AG04449 (cell line): ENCODE measurements at regions of chr6 and their contacts with region 1.

Region 1: DNA sequence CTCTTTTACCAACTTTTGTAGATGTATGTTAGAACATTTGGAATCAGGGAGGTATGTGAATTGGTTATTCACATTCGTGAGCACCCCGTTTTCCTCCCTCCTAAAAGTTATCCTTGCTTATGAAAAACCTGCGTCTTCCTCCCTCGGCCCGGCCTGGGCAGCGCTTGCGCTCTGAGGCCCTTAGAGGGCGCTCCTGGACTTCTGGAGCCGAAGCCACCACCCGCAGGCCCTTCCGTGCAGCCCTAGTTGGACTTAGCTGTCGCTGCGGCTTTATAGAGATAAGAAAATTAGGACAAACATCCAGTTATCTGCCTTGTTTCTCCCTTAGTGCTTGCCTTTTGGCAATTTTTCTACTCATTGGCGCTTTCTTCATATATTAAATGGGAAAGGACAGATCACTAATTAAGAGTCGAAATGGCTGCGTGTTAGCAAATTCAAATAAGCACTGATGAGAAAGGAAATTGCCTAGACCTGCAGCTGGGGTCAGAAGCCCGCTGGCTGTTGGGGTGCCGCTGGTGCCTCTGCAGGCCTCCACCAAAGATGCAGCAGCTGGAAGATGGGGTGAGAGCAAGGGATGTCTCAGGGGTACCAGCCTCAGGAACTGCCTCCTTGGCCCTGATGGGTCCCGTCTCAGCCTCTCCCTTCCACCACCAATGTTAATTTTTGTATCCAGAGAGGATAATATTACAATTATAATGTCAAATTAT is 5.2 kb downstream of the FNDC1 start:
- DNase-seq: no peak
- H3K4me3 ChIP-seq: no peak overlapping the region
- CTCF ChIP-seq: peak; percentile 97

Region 2: GRCh38 chr6:159184559-159184958 is 10.1 kb after region 1 on chr6:
- CTCF ChIA-PET with region 1: interaction called, 48 read pairs
- POLR2A ChIA-PET with region 1: interaction called, 4 read pairs
- DNase-seq: no peak
- H3K4me3 ChIP-seq: no peak overlapping the region
- CTCF ChIP-seq: no peak

Region 3: GRCh38 chr6:159190460-159190859 is 16.0 kb after region 1 on chr6:
- CTCF ChIA-PET with region 1: interaction called, 48 read pairs
- POLR2A ChIA-PET with region 1: no interaction called
- DNase-seq: no peak
- H3K4me3 ChIP-seq: no peak overlapping the region
- CTCF ChIP-seq: no peak

Region 4: DNA sequence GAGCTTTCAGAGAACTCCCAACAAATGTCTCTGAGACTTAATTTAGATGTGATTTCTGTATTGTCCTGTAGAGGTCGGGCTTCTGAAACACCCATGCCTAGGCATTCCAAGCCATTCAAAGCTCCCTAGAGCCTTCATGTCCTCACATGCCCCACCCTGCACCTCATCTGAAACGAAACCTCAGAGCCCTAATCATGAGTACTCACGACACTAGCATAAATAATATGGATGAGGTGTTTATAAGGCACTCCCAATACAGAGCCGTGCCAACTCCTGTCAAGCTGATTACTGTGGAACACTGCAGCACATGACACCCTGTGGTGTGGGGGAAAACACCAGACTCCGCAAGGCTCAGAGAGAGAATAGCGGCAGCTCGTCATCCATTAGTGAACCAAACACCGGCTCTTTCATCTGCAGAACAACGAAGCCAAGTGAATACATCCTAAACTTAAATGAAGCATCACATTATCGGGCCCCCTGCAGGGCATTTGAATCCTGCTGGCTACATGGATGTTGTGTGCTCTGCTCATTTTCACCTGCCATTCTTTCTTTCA is 78.6 kb after region 1 on chr6:
- CTCF ChIA-PET with region 1: interaction called, 27 read pairs
- POLR2A ChIA-PET with region 1: no interaction called
- DNase-seq: no peak
- H3K4me3 ChIP-seq: no peak overlapping the region
- CTCF ChIP-seq: peak; percentile 26

Region 5: DNA sequence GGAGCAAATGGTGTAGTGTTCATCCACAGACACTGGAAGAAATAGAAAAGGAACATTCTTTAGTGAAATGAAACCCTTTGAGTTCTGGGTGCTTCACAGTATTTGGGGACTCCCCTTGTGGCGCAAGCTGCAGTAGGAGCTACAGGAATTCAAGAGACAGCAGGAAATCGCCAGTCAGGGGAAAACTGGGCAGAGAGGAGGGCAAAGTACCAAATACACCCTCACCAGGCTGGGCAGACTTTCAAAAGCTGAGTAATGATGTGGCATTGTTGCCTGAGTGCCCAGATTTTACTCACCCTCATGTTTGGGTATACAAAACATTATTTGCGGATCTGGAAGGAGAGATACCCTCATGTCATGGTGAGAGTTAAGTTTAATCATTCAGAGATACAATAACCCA is 420.8 kb after region 1 on chr6:
- CTCF ChIA-PET with region 1: interaction called, 25 read pairs
- POLR2A ChIA-PET with region 1: no interaction called
- DNase-seq: no peak
- H3K4me3 ChIP-seq: no peak overlapping the region
- CTCF ChIP-seq: no peak

Region 6: GRCh38 chr6:159608961-159609651 is 434.7 kb after region 1 on chr6:
- CTCF ChIA-PET with region 1: interaction called, 12 read pairs
- POLR2A ChIA-PET with region 1: no interaction called
- DNase-seq: no peak
- H3K4me3 ChIP-seq: no peak overlapping the region
- CTCF ChIP-seq: peak; percentile 59

Region 7: GRCh38 chr6:159646733-159647132 is 472.3 kb after region 1 on chr6:
- CTCF ChIA-PET with region 1: interaction called, 15 read pairs
- POLR2A ChIA-PET with region 1: no interaction called
- DNase-seq: no peak
- H3K4me3 ChIP-seq: no peak overlapping the region
- CTCF ChIP-seq: no peak